Gastrocnemius medialis (tissue), 4 donors: ENCODE measurements at regions of chr5 and their contacts with region 1.

Region 1: GRCh38 chr5:155978850-155979249 is 348.1 kb upstream of the SGCD start:
- DNase-seq: peak; percentile 47 to 63
- ATAC-seq: peak; percentile 94 to 98
- H3K4me3 ChIP-seq: no peak overlapping the region
- H3K27ac ChIP-seq: peak overlapping the region; percentile 62 to 70 (median 66)
- H3K4me1 ChIP-seq: peaks cover 24 to 29% of the 10 kb centered on the region in 2 donors
- H3K27me3 ChIP-seq: no peaks in the 10 kb centered on the region
- CTCF ChIP-seq: no peak
- POLR2A ChIP-seq: no peak

Region 2: DNA sequence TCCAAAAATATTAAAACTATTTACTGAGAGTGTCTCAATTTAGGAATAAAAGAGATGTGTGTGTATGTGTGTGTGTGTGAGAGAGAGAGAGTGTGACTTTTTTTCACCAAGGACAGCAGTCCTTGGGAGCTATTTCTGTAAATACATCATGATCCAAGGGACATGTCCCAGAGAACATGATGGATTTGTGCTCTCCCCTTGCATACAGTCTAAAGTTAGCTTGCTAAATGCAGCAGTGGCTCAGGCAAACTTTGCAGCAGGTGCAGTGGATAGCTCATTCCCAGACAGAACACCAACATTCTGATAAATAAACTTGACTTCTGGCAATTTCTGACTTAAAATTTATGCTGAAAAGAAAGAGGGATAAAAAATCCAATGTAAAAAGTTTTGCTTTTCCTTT is 292.7 kb after region 1 on chr5:
- in situ Hi-C with region 1: no loop called
- intact Hi-C with region 1: loop called (anchors 10 kb)
- DNase-seq: peak; percentile 57 to 66
- ATAC-seq: peak; percentile 100
- H3K4me3 ChIP-seq: no peak overlapping the region
- H3K27ac ChIP-seq: peak overlapping the region; percentile 72 to 81 (median 78)
- H3K4me1 ChIP-seq: peaks cover 26 to 32% of the 10 kb centered on the region in 2 donors
- H3K27me3 ChIP-seq: no peaks in the 10 kb centered on the region
- CTCF ChIP-seq: no peak
- POLR2A ChIP-seq: no peak